Cardiac septum (tissue), 1 donor: ENCODE measurements at regions of chr3 and their contacts with region 1.

Region 1: GRCh38 chr3:76570436-76571057 is 469.4 kb upstream of the ROBO2 start:
- DNase-seq: no peak

Region 2: GRCh38 chr3:76024640-76025039 is 545.9 kb before region 1 on chr3:
- intact Hi-C with region 1: loop called (anchors 10 kb)
- DNase-seq: no peak

Region 3: DNA sequence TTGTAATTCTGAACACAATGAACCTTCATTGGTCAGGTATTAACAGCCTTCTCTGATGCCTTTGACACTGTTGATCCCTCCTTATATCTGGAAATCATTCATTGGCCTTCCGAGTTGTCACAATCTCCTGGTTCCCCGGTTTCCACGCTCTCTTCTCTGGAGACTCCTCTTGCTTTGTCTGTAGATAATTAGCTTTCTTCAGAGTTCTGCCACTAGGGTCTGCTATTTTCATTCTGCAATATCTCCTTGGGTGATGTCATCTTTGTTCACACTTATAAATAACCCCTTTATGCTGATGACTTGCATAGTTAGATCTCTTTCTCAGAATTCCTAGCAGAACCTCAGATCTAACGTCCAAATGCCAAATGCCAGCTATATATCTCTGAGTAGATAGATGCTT is 201.4 kb before region 1 on chr3:
- intact Hi-C with region 1: loop called (anchors 5 kb)
- DNase-seq: no peak

Region 4: DNA sequence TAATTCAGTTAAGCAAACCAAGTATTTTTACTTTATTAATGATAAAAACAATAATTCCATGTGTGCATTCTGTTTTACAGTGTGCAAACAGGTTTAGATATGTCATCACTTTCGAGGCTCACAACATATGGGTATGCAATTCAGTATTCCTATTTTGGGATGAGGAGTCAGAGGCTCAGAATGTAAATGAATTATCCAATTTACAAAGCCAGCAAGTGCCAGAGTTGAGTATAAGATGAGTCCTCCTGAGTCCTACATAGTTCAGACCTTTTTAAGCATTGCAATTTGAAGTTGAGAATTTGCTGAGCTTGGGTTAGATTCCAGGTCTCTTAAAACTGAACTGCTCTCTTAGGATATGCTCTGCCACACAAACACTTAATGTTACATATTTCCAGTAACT is 45.2 kb after region 1 on chr3:
- intact Hi-C with region 1: no loop called
- DNase-seq: no peak